ENCODE measurements at regions of chr4 and their contacts with region 1.

Region 1: DNA sequence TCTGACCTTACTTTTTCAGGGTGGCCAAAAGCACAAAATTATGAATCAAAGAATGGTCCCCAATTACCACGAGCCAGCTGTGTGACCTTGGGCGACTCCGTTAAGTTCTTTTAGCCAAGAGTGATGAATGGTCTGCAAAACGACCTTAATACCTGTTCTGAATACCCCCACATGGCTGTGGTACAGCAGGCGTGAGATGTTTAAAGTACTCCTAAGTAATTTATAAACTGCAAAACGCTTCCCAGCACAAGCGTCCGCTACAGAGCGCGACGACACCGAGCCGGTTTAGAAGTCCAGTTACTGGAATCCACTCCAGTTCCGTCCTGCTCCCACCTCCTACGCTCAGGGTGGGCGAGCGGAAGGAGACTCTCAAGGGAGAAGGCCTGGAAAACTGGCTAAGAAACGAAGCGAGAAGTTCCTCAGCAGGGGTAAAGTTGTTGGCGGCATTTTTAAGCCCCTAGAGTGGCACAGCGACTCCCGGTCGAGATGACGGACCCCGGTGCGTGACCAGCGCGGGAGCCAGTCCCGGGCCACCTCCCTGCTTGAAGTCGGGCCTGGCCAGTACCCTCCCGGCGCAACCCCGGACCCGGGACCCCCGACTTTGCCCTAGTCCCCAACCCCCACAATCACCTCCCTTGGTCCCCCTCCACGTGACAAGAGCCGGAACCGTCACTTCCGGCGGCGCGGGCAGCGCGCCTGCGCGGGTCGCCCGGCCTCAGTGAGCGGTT is 683 bp upstream of the BMP2K start:
- DNase-seq: no peak
- ATAC-seq: peak; percentile 65
- H3K4me3 ChIP-seq: peak overlapping the region; percentile 99
- H3K27ac ChIP-seq: peak overlapping the region; percentile 80
- H3K4me1 ChIP-seq: peaks cover 20% of the 10 kb centered on the region
- H3K27me3 ChIP-seq: no peaks in the 10 kb centered on the region
- CTCF ChIP-seq: no peak
- EP300 ChIP-seq: peak in 1 of 2 experiments; percentile 58; a peak in 1 of 4 replicates
- POLR2A ChIP-seq: no peak
- RAD21 ChIP-seq: no peak

Region 2: DNA sequence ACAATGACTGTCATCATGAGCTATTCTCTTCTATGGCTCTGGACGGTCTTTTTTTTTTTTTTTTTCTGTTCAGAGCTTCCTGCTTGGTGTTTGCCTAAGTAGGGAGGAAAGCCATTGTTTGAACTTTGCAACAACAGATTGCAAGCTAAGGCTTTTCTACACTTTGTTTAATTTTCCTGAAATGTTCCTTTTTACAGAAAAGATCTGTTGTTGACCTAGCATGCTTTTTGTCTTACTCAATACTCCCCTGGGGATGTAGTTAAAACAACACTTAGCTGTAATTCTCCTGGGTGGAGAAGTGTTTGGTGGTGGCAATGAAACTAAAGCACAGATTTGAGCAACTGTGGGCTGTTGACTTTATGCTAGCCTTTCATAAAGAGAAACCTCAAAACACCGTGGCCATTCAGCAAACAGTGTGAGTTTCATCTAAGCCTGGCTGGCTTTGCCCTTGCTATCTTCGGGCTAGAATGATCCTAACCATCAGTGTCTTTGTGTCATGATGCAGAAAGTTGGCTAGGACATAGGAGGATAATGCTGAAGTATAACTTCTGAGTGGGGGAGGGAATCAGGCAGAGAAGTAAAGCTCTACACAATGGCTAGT is 113.4 kb before region 1 on chr4:
- CTCF ChIA-PET with region 1: interaction called, 3 read pairs
- POLR2A ChIA-PET with region 1: interaction called, 5 read pairs
- RAD21 ChIA-PET with region 1: interaction called, 3 read pairs
- SMC1A ChIA-PET with region 1: interaction called, 4 read pairs
- in situ Hi-C with region 1: no loop called
- intact Hi-C with region 1: loop called (anchors 5 kb)
- DNase-seq: peak; percentile 77
- ATAC-seq: peak; percentile 90
- H3K4me3 ChIP-seq: no peak overlapping the region
- H3K27ac ChIP-seq: no peak overlapping the region
- H3K4me1 ChIP-seq: peaks cover 33% of the 10 kb centered on the region
- H3K27me3 ChIP-seq: peaks cover 0 to 1% of the 10 kb centered on the region in 2 experiments; a peak in 1 of 4 replicates
- CTCF ChIP-seq: no peak
- EP300 ChIP-seq: peak in 1 of 2 experiments; percentile 64; a peak in 1 of 4 replicates
- POLR2A ChIP-seq: no peak
- RAD21 ChIP-seq: no peak

Region 3: DNA sequence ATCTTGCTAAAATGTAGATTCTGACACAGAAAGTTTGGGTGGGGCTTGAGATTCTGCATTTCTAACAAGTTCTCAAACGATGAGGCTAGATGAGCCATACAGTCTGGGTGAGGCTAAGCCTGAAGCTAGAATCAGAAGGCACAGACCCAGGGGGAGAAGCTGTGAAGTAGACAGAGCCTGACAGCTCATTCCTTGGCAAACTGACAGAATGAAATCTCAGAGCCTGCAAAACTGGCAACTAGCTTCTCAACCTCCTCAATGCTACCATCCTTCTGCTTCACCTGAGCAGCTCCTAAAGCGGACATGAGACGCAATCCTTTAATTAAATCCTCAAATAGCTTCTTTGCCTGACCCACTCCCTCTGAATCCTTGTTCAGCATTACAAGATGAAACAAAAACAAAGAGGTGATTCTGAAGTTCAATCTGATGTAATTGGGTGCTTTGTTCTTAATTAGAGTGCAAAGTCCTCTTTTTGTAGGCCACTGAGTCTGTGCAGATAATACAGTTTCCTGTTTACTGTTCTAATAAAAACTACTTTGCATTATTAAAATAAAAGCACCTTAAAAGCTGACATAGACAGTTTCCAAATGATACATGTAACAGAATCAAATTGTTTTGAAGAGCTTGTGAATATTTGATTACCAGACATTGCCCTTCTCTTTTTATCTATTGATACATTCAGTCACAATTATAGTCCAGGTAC is 70.3 kb before region 1 on chr4:
- CTCF ChIA-PET with region 1: no interaction called
- POLR2A ChIA-PET with region 1: no interaction called
- RAD21 ChIA-PET with region 1: interaction called, 3 read pairs
- SMC1A ChIA-PET with region 1: interaction called, 11 read pairs
- in situ Hi-C with region 1: no loop called
- intact Hi-C with region 1: no loop called
- DNase-seq: no peak
- ATAC-seq: peak; percentile 40
- H3K4me3 ChIP-seq: no peak overlapping the region
- H3K27ac ChIP-seq: no peak overlapping the region
- H3K4me1 ChIP-seq: peaks cover 24% of the 10 kb centered on the region
- H3K27me3 ChIP-seq: no peaks in the 10 kb centered on the region
- CTCF ChIP-seq: no peak
- EP300 ChIP-seq: no peak
- POLR2A ChIP-seq: no peak
- RAD21 ChIP-seq: no peak

Region 4: GRCh38 chr4:78737035-78737434 is 38.4 kb before region 1 on chr4:
- CTCF ChIA-PET with region 1: interaction called, 3 read pairs
- POLR2A ChIA-PET with region 1: interaction called, 3 read pairs
- RAD21 ChIA-PET with region 1: interaction called, 5 read pairs
- SMC1A ChIA-PET with region 1: interaction called, 3 read pairs
- in situ Hi-C with region 1: no loop called
- intact Hi-C with region 1: loop called (anchors 5 kb)
- DNase-seq: peak; percentile 26
- ATAC-seq: peak; percentile 69
- H3K4me3 ChIP-seq: no peak overlapping the region
- H3K27ac ChIP-seq: no peak overlapping the region
- H3K4me1 ChIP-seq: peaks cover 33% of the 10 kb centered on the region
- H3K27me3 ChIP-seq: no peaks in the 10 kb centered on the region
- CTCF ChIP-seq: no peak
- EP300 ChIP-seq: peak in 1 of 2 experiments; percentile 64; a peak in 2 of 4 replicates
- POLR2A ChIP-seq: no peak
- RAD21 ChIP-seq: no peak

Region 5: GRCh38 chr4:78799551-78800495 is 24.4 kb after region 1 on chr4:
- CTCF ChIA-PET with region 1: interaction called, 4 read pairs
- POLR2A ChIA-PET with region 1: interaction called, 4 read pairs
- RAD21 ChIA-PET with region 1: interaction called, 12 read pairs
- SMC1A ChIA-PET with region 1: interaction called, 7 read pairs
- in situ Hi-C with region 1: no loop called
- intact Hi-C with region 1: no loop called
- DNase-seq: no peak
- ATAC-seq: peak; percentile 73
- H3K4me3 ChIP-seq: no peak overlapping the region
- H3K27ac ChIP-seq: no peak overlapping the region
- H3K4me1 ChIP-seq: peaks cover 6% of the 10 kb centered on the region; the same call in 1 of the 2 replicates
- H3K27me3 ChIP-seq: no peaks in the 10 kb centered on the region
- CTCF ChIP-seq: no peak
- EP300 ChIP-seq: no peak
- POLR2A ChIP-seq: no peak
- RAD21 ChIP-seq: no peak

Measured in GM12878 (cell line).